Spleen (tissue), 13 donors: ENCODE measurements at regions of chr15 and their contacts with region 1.

Region 1: DNA sequence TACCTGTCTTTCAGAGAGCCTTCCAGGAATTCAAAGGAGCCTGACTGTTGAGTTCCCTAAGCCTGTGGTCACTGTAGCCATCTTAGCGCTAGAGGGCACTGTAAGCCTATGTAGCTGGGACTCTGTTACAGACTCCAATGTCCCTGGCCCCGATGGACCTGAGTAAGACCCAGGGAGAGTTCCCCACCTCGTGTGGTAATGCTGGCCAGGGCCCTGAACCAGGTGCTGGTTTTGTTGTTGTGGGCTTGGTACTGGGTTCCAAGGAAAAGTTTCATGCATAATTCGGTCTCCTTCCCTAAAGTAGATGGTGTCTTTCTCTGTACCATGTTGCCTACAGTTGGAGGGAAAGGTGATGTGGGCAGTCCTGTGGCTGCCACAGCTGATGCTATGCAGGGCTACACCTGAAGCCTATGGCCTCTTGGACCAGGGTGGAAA is 32.4 kb downstream of the CDAN1 start:
- DNase-seq: no peak
- H3K4me3 ChIP-seq: no peak overlapping the region
- H3K27ac ChIP-seq: no peak overlapping the region
- H3K4me1 ChIP-seq: peaks cover 0 to 4% (median 0%) of the 10 kb centered on the region in 6 donors
- H3K27me3 ChIP-seq: no peaks in the 10 kb centered on the region
- CTCF ChIP-seq: peak; percentile 35 to 85 (median 71)
- POLR2A ChIP-seq: no peak

Region 2: DNA sequence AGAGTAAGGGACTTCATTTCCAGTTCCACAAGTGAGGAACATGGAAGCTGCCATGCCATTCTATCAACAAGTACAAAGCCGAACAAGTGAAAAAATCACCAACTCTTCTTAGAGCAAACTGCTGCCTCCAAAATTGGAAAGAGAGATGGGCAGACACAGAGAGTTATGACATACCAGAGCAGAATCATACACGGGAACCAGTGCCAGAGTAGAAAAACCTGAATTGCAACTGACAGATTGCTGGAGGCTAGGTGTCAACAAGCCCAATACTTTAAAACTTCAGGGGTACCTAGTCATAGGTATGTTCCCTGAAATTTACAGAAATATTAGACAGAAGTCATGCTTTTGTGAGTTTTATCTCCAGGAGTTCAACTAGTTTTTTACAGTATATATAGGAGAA is 154.0 kb after region 1 on chr15:
- intact Hi-C with region 1: no loop called
- DNase-seq: no peak
- H3K4me3 ChIP-seq: no peak overlapping the region
- H3K27ac ChIP-seq: no peak overlapping the region
- H3K4me1 ChIP-seq: no peaks in the 10 kb centered on the region
- H3K27me3 ChIP-seq: no peaks in the 10 kb centered on the region
- CTCF ChIP-seq: no peak
- POLR2A ChIP-seq: no peak

Region 3: DNA sequence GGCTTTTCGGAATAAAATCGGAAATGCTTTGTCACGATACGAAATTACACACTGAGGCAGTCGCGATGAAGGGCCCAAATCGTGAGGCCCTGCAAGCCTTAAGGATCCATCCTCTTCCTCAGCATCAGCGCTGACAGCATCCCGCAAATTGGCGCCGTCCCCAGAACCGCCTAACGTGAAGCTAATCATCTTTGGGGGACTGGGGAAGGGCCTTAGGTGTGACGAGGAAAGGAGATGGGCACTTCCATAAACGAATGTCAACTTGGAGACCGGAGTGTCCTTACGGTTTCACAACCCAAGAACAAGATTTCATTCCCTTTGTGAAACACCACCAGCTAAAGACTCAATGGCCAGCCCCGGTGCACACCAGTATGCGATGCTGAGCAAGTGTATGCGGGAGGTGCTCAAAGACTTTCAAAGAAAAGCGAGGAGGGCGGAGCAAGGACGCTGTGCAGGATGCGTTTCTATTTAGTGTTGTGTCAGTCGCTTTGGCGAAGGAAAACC is 216.8 kb after region 1 on chr15:
- intact Hi-C with region 1: loop called (anchors 2 kb)
- DNase-seq: peak; percentile 83
- H3K4me3 ChIP-seq: peak overlapping the region; percentile 69 to 98 (median 96)
- H3K27ac ChIP-seq: peak overlapping the region in 7 of 8 donors; percentile 51 to 94 (median 90)
- H3K4me1 ChIP-seq: peaks cover 9 to 50% (median 33%) of the 10 kb centered on the region in 6 donors
- H3K27me3 ChIP-seq: no peaks in the 10 kb centered on the region
- CTCF ChIP-seq: no peak
- POLR2A ChIP-seq: no peak